ENCODE measurements at regions of chrX and their contacts with region 1.

Region 1: GRCh38 chrX:5726224-5726623 is 502.4 kb downstream of the NLGN4X start:
- H3K4me3 Mint-ChIP-seq: peak overlapping the region; percentile 78
- H3K27ac Mint-ChIP-seq: peak overlapping the region; percentile 94
- H3K4me1 Mint-ChIP-seq: peaks cover 17% of the 10 kb centered on the region
- H3K27me3 Mint-ChIP-seq: peaks cover 6% of the 10 kb centered on the region

Region 2: GRCh38 chrX:5646818-5647217 is 79.4 kb before region 1 on chrX:
- intact Hi-C with region 1: no loop called
- H3K4me3 Mint-ChIP-seq: no peak overlapping the region
- H3K27ac Mint-ChIP-seq: no peak overlapping the region
- H3K4me1 Mint-ChIP-seq: peaks cover 13% of the 10 kb centered on the region
- H3K27me3 Mint-ChIP-seq: peaks cover 3% of the 10 kb centered on the region

Region 3: GRCh38 chrX:5775846-5776430 is 49.7 kb after region 1 on chrX:
- intact Hi-C with region 1: loop called (anchors 10 kb)
- H3K4me3 Mint-ChIP-seq: no peak overlapping the region
- H3K27ac Mint-ChIP-seq: peak overlapping the region; percentile 82
- H3K4me1 Mint-ChIP-seq: peaks cover 26% of the 10 kb centered on the region
- H3K27me3 Mint-ChIP-seq: peaks cover 2% of the 10 kb centered on the region

Measured in dendritic cell treated with granulocyte-macrophage colony-stimulating factor and Interleukin-4, amounts not matched to agents 40 ng/mL and 50 ng/mL, for 4 days (primary cell).